Sigmoid colon (tissue), 7 donors: ENCODE measurements at regions of chr6 and their contacts with region 1.

Region 1: DNA sequence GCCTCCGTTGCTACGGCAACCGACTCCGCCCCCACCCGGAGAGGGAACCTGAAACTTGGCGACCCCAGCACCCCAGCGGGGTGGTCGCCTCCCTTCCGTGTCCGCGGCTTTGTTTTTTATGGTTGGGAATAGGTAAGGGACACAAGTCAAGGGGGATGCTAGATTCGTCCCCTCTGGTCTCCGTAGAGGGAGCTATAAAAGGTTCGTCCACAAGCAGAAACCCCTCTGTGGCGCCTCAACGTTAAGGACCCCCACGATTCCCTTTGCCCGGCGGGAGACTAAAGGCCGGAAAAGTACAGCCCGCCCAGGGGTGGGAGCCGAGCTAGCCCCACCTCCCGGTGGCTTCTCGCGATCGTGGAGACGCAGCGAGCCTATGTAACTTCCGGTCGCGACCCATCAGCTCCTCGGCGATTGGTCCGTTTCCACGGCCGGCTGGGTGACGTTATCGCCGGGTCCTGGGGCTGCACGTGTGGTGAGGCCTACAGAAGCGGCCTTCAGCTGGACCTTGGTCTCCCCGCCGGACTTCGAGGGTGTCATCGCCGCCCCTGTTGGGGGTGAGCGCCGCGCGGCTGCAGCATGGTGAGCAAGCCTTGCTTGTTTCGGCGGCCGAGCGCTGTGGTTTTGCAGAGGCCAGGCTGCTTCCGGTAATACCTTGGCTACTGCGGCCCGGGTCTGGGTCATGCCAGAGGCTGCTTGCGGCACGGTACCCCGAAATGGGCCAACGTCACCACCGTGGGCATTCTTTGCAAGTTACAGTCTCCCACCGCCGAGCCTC is at the start of gene LTV1:
- DNase-seq: peak; percentile 99
- H3K4me3 ChIP-seq: peak within 1 kb of the TSS; percentile 64 to 86 (median 78)
- H3K27ac ChIP-seq: peak within 1 kb of the TSS; percentile 89 to 97 (median 94)
- H3K4me1 ChIP-seq: peaks cover 0 to 19% (median 11%) of the 10 kb centered on the region in 4 donors
- H3K27me3 ChIP-seq: no peaks in the 10 kb centered on the region
- CTCF ChIP-seq: no peak
- EP300 ChIP-seq: no peak
- POLR2A ChIP-seq: peak; percentile 51 to 57
- total RNA-seq, gene LTV1: 10.0 to 16.8 (median 16.4) TPM

Region 2: GRCh38 chr6:143450453-143451371 is 392.4 kb before region 1 on chr6 and contains the starts of genes ADAT2 and PEX3:
- intact Hi-C with region 1: loop called (anchors 5 kb)
- DNase-seq: peak; percentile 95
- H3K4me3 ChIP-seq: peak within 1 kb of the TSS; percentile 52 to 88 (median 76)
- H3K27ac ChIP-seq: peak within 1 kb of the TSS; percentile 69 to 79 (median 76)
- H3K4me1 ChIP-seq: peaks cover 0 to 29% (median 20%) of the 10 kb centered on the region in 4 donors
- H3K27me3 ChIP-seq: no peaks in the 10 kb centered on the region
- CTCF ChIP-seq: no peak
- EP300 ChIP-seq: no peak
- POLR2A ChIP-seq: peak; percentile 28 to 49
- total RNA-seq, gene ADAT2: 2.2 to 8.7 (median 2.9) TPM
- total RNA-seq, gene PEX3: 10.6 to 16.1 (median 12.3) TPM

Region 3: GRCh38 chr6:143465546-143465945 is 377.5 kb before region 1 on chr6:
- intact Hi-C with region 1: no loop called
- DNase-seq: no peak
- H3K4me3 ChIP-seq: no peak overlapping the region
- H3K27ac ChIP-seq: no peak overlapping the region
- H3K4me1 ChIP-seq: no peaks in the 10 kb centered on the region
- H3K27me3 ChIP-seq: no peaks in the 10 kb centered on the region
- CTCF ChIP-seq: no peak
- EP300 ChIP-seq: no peak
- POLR2A ChIP-seq: no peak

Region 4: DNA sequence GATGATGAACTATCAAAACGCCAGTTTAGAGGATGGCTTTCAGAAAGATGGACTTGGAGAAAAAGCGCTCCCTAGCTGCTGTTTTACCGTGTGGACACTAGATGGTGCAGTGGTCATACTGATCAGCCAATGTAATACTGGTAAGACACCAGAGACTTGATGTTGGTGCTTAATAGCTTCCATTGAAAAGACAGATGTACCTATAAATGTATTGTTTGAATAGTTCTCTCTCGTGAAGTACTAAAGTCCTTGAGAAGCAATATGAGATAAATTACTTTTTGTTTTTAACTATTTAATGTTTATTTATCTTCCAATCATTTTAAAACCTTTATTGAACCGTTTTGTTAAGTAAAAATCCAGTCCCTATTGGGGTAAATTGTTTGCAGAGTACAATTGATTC is 267.6 kb before region 1 on chr6:
- intact Hi-C with region 1: loop called (anchors 1 kb)
- DNase-seq: peak; percentile 74
- H3K4me3 ChIP-seq: no peak overlapping the region
- H3K27ac ChIP-seq: peak overlapping the region in 1 of 4 donors; percentile 6
- H3K4me1 ChIP-seq: no peaks in the 10 kb centered on the region
- H3K27me3 ChIP-seq: no peaks in the 10 kb centered on the region
- CTCF ChIP-seq: peak; percentile 78 to 90 (median 88)
- EP300 ChIP-seq: no peak
- POLR2A ChIP-seq: no peak

Region 5: GRCh38 chr6:143677891-143678791 is 164.9 kb before region 1 on chr6 and contains the start of gene PHACTR2:
- intact Hi-C with region 1: loop called (anchors 2 kb)
- DNase-seq: peak; percentile 91
- H3K4me3 ChIP-seq: peak within 1 kb of the TSS; percentile 56 to 85 (median 78)
- H3K27ac ChIP-seq: peak within 1 kb of the TSS; percentile 87 to 95 (median 91)
- H3K4me1 ChIP-seq: peaks cover 0 to 15% (median 2%) of the 10 kb centered on the region in 4 donors
- H3K27me3 ChIP-seq: no peaks in the 10 kb centered on the region
- CTCF ChIP-seq: no peak
- EP300 ChIP-seq: no peak
- POLR2A ChIP-seq: peak in 1 of 2 donors; percentile 20
- total RNA-seq, gene PHACTR2: 17.6 to 51.9 (median 28.0) TPM

Region 6: DNA sequence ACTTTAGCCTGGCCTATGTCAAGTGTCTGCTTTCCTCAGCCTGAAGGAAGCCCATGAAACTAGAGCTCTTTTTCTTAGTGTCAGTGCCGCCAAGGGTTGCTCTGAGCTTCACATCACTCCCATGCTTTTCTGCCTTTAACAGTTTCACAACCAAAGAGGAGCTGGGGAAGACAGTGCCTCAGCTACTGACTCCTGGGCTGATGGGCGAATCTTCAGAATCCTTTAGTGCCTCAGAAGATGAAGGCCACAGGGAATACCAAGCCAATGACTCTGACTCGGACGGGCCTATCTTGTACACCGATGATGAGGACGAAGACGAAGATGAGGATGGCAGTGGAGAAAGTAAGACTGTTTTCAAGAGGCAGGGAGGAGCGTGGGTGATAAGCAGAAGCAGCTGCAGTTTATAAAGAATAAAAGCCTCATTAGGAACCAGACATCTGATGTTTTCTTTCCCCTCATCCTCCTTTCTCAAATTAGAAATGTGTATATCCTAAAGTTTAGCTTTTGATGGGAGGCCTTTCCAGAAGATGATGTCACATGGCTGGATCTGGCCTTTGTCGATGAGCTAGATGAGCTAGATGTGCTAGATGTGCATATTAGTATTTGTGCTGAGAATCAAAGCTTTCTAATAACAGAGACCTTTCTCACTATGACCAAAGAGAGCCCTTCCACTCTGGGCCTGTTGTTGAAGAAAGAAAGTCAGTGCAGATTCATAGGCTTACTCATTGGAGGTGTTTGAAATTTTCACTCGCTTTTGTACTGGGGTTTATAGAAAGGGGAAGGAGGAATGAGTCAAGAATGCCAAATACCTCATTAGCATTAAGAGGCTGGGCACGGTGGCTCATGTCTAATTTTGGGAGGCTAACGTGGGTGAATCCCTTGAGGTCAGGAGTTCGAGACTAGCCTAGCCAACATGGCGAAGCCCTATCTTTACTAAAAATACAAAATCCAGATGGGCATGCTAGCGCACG is 70.7 kb before region 1 on chr6:
- intact Hi-C with region 1: loop called (anchors 2 kb)
- DNase-seq: no peak
- H3K4me3 ChIP-seq: no peak overlapping the region
- H3K27ac ChIP-seq: peak overlapping the region; percentile 19 to 59 (median 50)
- H3K4me1 ChIP-seq: peaks cover 0 to 45% (median 31%) of the 10 kb centered on the region in 4 donors
- H3K27me3 ChIP-seq: no peaks in the 10 kb centered on the region
- CTCF ChIP-seq: no peak
- EP300 ChIP-seq: no peak
- POLR2A ChIP-seq: no peak

Region 7: GRCh38 chr6:143878316-143878924 is 35.3 kb after region 1 on chr6:
- intact Hi-C with region 1: no loop called
- DNase-seq: no peak
- H3K4me3 ChIP-seq: no peak overlapping the region
- H3K27ac ChIP-seq: no peak overlapping the region
- H3K4me1 ChIP-seq: no peaks in the 10 kb centered on the region
- H3K27me3 ChIP-seq: no peaks in the 10 kb centered on the region
- CTCF ChIP-seq: no peak
- EP300 ChIP-seq: no peak
- POLR2A ChIP-seq: no peak

Region 8: DNA sequence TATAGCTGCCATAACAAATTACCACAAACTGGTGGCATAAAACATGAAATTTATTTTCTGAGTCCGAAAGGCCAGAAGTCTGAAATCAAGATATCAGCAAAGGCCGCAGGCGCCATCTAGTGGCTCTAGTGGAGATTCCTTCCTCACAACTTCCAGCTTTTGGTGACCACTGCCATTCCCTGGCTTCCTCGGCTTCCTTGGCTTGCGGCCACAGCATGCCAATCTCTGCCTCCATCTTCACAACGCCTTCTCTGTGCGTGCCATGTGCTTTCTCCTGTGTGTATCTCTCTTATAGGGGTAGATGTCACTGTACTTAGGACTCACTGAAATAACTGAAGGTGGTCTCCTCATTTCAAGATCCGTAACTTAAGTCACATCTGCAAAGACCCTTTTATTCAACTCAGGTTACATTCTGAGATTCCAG is 170.4 kb after region 1 on chr6:
- intact Hi-C with region 1: loop called (anchors 5 kb)
- DNase-seq: peak; percentile 85
- H3K4me3 ChIP-seq: no peak overlapping the region
- H3K27ac ChIP-seq: no peak overlapping the region
- H3K4me1 ChIP-seq: no peaks in the 10 kb centered on the region
- H3K27me3 ChIP-seq: no peaks in the 10 kb centered on the region
- CTCF ChIP-seq: peak; percentile 76 to 90 (median 84)
- EP300 ChIP-seq: no peak
- POLR2A ChIP-seq: no peak

Region 9: GRCh38 chr6:144095331-144096002 is 252.4 kb after region 1 on chr6 and contains the start of gene SF3B5:
- intact Hi-C with region 1: loop called (anchors 10 kb)
- DNase-seq: peak; percentile 99
- H3K4me3 ChIP-seq: peak within 1 kb of the TSS; percentile 79 to 90 (median 86)
- H3K27ac ChIP-seq: peak within 1 kb of the TSS; percentile 88 to 93 (median 90)
- H3K4me1 ChIP-seq: peaks cover 0 to 17% (median 16%) of the 10 kb centered on the region in 4 donors
- H3K27me3 ChIP-seq: no peaks in the 10 kb centered on the region
- CTCF ChIP-seq: no peak
- EP300 ChIP-seq: peak in 1 of 4 donors; percentile 42
- POLR2A ChIP-seq: peak; percentile 59 to 75
- total RNA-seq, gene SF3B5: 110 to 200 (median 171) TPM